ENCODE measurements at regions of chrX and their contacts with region 1.

Region 1: DNA sequence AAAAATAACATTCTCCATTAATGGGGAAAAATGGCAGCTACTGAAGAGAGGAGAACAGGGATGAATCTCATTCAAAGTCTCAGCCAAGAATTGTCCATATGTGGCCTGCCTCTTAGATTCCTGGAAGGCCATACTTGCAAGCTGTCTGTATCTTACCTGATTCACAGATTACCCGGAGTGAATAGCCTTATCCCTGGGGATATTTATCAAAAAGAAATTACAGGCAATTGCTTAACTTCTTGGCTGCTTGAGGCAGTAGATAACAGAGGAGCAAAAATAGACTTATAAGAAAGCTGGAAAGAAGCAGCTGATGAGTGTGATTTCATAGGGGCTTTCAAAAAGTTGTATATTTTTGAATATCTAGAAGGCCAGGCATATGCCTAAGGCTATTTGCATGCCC is 68.8 kb upstream of the PPP1R2C start:
- DNase-seq: no peak
- H3K4me3 ChIP-seq: no peak overlapping the region
- H3K27ac ChIP-seq: no peak overlapping the region
- H3K4me1 ChIP-seq: no peaks in the 10 kb centered on the region
- H3K27me3 ChIP-seq: peaks cover 0 to 22% of the 10 kb centered on the region in 2 donors
- CTCF ChIP-seq: no peak
- POLR2A ChIP-seq: no peak

Region 2: DNA sequence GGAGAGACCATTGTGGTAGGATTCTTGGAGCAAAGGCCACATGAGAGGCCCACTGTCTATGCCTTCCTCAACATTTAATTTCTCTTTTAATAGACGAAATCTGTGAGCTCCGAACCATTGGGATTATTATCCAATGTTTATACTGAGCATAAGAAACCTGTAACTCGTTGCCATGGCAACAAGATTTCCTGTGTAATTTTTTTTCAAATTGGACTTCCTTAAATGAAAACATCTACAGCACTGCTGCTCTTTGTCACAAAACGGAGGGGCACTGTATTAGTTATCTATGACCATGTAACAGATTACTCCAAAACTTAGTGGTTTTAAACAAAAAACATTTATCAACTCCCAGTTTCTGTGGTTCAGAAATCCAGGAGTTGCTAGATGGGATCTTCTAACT is 107.5 kb before region 1 on chrX:
- intact Hi-C with region 1: loop called (anchors 10 kb)
- DNase-seq: no peak
- H3K4me3 ChIP-seq: no peak overlapping the region
- H3K27ac ChIP-seq: no peak overlapping the region
- H3K4me1 ChIP-seq: no peaks in the 10 kb centered on the region
- H3K27me3 ChIP-seq: peaks cover 0 to 3% of the 10 kb centered on the region in 2 donors
- CTCF ChIP-seq: no peak
- POLR2A ChIP-seq: no peak